Activated T-helper 1 cell treated with anti-CD3 and anti-CD28 coated beads, Interleukin-12 subunit alpha, Interleukin-12 subunit beta, Interleukin-2, Interleukin-4 antibody, amounts not matched to agents 30 ng/mL and 10 ng/mL and 1 ng/mL, durations not matched to agents 14 hours and 24 hours and 36 hours (primary cell): ENCODE measurements at regions of chr12 and their contacts with region 1.

Region 1: GRCh38 chr12:95072900-95073697 is at the start of gene NR2C1:
- DNase-seq: peak; percentile 90
- H3K4me3 Mint-ChIP-seq: peak within 1 kb of the TSS; percentile 93
- H3K27ac Mint-ChIP-seq: peak within 1 kb of the TSS; percentile 92
- H3K4me1 Mint-ChIP-seq: peaks cover 16% of the 10 kb centered on the region
- H3K27me3 Mint-ChIP-seq: peaks cover 7% of the 10 kb centered on the region
- total RNA-seq, gene NR2C1: 26.1 and 27.3 TPM in 2 replicates

Region 2: GRCh38 chr12:94941440-94941862 is 131.6 kb before region 1 on chr12:
- intact Hi-C with region 1: loop called (anchors 5 kb)
- DNase-seq: peak; percentile 39
- H3K4me3 Mint-ChIP-seq: no peak overlapping the region
- H3K27ac Mint-ChIP-seq: peak overlapping the region; percentile 63
- H3K4me1 Mint-ChIP-seq: peaks cover 43% of the 10 kb centered on the region
- H3K27me3 Mint-ChIP-seq: no peaks in the 10 kb centered on the region

Region 3: DNA sequence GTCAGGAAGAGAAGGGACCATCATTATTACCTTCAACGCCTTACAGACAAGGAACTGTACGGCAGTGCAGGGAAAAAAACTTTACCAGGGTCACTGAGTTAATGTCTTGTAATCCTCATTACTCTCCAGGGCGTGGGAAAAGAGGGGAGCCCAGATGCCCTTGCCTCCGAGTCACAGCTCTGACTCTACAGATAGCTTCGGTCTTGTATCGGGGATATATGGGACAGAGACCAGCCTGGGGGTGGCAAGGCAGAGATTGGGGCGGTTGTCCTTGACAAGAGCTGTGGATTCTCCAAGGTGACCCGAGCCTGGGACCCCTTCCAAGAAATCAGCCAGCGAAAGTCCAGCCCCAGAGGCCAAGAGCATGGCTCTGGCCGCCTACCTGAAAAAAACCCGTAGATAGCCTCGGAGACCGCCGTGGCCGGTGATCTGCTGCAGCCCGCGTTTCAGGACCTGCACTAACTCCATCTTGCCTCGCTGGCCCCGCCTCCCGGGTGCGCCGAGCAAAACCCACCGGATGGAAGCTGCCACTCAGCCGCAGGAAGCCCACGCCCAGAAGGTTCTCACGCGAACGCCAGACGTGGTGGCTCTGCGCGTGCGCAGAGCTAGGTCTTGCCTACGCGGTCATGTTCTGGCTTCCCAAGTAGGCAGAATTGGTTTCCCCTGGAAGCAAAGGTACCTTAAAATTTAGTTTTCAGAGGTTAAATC is 69.7 kb before region 1 on chr12 and contains the start of gene NDUFA12:
- intact Hi-C with region 1: loop called (anchors 1 kb)
- DNase-seq: peak; percentile 94
- H3K4me3 Mint-ChIP-seq: peak within 1 kb of the TSS; percentile 95
- H3K27ac Mint-ChIP-seq: peak within 1 kb of the TSS; percentile 93
- H3K4me1 Mint-ChIP-seq: peaks cover 30% of the 10 kb centered on the region
- H3K27me3 Mint-ChIP-seq: no peaks in the 10 kb centered on the region
- total RNA-seq, gene NDUFA12: 113 TPM in 2 replicates

Region 4: DNA sequence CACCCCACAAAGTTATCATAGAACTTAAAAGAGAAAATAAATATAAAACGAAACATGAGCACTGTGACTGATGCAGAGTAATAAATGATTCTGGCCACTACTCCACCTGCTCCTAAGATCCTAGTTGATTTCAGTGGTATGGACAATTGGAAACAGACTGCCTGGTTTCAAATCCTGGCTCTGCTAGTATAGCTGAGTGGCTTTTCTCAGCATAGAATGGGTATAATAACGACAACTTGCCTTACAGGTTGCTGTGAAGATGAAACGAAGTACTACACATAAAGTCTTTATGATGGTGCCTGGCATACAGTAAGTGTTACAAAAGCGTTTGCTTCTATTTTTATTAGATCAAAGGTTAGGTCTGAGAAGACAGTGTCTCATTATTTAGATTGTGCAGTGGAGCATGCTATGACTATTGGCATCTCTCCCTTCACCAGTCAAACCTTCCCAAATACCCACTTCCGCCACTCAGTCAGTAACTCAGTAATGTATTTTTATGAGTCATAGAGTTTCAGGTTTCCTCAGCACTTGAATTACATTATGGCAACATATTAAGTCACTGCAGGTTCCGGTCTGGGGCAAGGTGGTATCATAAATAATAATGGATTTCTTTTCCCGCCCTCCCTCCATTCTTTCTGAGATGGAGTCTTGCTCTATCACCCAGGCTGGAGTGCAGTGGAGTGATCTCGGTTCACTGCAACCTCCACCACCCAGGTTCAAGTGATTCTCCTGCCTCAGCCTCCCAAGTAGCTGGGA is 30.0 kb after region 1 on chr12:
- intact Hi-C with region 1: loop called (anchors 1 kb)
- DNase-seq: peak; percentile 39
- H3K4me3 Mint-ChIP-seq: no peak overlapping the region
- H3K27ac Mint-ChIP-seq: peak overlapping the region; percentile 20
- H3K4me1 Mint-ChIP-seq: peaks cover 10% of the 10 kb centered on the region
- H3K27me3 Mint-ChIP-seq: no peaks in the 10 kb centered on the region

Region 5: GRCh38 chr12:95473884-95474659 is 401.0 kb after region 1 on chr12 and contains the start of gene METAP2:
- intact Hi-C with region 1: loop called (anchors 1 kb)
- DNase-seq: peak; percentile 86
- H3K4me3 Mint-ChIP-seq: peak within 1 kb of the TSS; percentile 100
- H3K27ac Mint-ChIP-seq: peak within 1 kb of the TSS; percentile 100
- H3K4me1 Mint-ChIP-seq: peaks cover 46% of the 10 kb centered on the region
- H3K27me3 Mint-ChIP-seq: no peaks in the 10 kb centered on the region
- total RNA-seq, gene METAP2: 118 and 121 TPM in 2 replicates

Region 6: DNA sequence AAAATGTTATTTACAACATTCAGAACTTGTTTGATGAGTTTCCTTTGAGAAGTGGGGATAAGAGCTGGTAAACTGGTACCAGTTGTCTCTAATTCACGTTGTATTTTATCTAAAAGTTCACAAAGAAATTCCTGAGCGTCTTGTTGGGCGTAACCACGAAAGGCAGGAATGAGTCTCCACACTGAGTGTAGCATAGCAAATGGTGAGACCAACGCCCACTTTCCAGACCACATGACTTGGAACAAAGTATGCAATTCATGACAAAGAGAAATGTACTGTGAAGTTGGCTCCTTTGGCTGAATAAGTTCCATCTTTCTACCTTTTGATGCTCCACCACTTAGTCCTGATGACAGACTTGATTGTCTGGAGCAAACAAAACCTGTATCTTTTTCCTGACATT is 459.8 kb after region 1 on chr12:
- intact Hi-C with region 1: loop called (anchors 1 kb)
- DNase-seq: no peak
- H3K4me3 Mint-ChIP-seq: no peak overlapping the region
- H3K27ac Mint-ChIP-seq: no peak overlapping the region
- H3K4me1 Mint-ChIP-seq: peaks cover 7% of the 10 kb centered on the region
- H3K27me3 Mint-ChIP-seq: no peaks in the 10 kb centered on the region

Region 7: GRCh38 chr12:95548539-95549391 is 475.7 kb after region 1 on chr12:
- intact Hi-C with region 1: loop called (anchors 1 kb)
- DNase-seq: peak; percentile 66
- H3K4me3 Mint-ChIP-seq: peak overlapping the region; percentile 91
- H3K27ac Mint-ChIP-seq: peak overlapping the region; percentile 62
- H3K4me1 Mint-ChIP-seq: peaks cover 34% of the 10 kb centered on the region
- H3K27me3 Mint-ChIP-seq: peaks cover 3% of the 10 kb centered on the region